ENCODE measurements at regions of chr7 and their contacts with region 1.

Region 1: DNA sequence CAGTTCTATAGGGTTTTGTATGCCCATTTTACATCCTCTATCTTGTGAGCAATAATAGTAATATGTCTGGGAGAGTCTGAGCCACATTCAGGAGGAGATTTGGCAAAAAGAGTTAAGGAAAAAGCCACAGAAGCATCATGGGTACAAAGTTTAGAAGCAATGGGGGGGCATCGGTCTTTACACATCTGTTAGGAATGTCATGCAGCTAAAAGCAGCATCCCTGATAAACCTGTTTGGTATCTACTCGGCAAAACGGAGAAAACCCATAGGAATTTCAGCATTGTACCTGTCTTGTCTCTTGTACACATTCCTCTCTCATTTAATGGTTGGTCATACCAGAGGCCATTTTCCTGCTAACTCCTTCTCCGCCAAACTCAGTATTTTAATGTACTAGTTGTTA is 12.5 kb upstream of the HERPUD2 start:
- DNase-seq: no peak
- H3K4me3 ChIP-seq: no peak overlapping the region
- H3K27ac ChIP-seq: no peak overlapping the region
- H3K4me1 ChIP-seq: peaks cover 28% of the 10 kb centered on the region
- H3K27me3 ChIP-seq: no peaks in the 10 kb centered on the region
- CTCF ChIP-seq: no peak

Region 2: DNA sequence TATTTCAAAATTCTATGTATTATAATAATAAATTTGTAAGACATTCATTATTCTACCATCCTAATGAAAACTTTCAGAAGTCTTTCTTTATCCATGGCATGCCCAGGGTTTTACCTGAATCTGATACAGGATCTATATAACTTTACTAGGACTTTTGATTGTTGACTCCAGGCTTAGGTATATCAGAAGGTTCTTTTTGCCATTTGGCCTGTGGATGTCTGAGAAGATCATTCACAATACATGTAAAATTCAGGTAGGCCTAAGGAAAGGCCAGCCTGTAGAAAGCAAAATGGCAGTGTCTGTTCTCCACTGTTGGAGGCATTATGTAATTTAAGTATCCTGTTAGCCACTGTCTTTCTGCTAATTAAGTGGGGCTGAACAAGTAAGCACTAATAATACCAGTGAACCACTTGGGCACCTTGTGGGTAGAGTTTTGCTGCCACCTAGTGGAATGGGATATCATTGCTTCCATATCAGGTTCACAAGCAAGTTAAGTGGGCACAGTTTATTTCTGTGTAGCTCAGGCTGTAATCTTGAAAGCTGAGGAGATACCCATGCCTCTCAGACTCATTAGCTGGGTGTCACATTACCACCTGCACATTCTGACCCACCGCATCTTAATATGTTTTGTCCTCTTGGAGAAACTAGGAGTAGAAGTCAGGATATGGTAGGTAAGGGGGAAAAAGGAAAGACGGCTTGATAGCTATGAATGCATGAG is 198.9 kb after region 1 on chr7:
- CTCF ChIA-PET with region 1: interaction called, 5 read pairs
- POLR2A ChIA-PET with region 1: no interaction called
- intact Hi-C with region 1: loop called (anchors 1 kb)
- DNase-seq: peak; percentile 87
- H3K4me3 ChIP-seq: no peak overlapping the region
- H3K27ac ChIP-seq: no peak overlapping the region
- H3K4me1 ChIP-seq: peaks cover 32% of the 10 kb centered on the region
- H3K27me3 ChIP-seq: no peaks in the 10 kb centered on the region
- CTCF ChIP-seq: peak; percentile 85

Region 3: DNA sequence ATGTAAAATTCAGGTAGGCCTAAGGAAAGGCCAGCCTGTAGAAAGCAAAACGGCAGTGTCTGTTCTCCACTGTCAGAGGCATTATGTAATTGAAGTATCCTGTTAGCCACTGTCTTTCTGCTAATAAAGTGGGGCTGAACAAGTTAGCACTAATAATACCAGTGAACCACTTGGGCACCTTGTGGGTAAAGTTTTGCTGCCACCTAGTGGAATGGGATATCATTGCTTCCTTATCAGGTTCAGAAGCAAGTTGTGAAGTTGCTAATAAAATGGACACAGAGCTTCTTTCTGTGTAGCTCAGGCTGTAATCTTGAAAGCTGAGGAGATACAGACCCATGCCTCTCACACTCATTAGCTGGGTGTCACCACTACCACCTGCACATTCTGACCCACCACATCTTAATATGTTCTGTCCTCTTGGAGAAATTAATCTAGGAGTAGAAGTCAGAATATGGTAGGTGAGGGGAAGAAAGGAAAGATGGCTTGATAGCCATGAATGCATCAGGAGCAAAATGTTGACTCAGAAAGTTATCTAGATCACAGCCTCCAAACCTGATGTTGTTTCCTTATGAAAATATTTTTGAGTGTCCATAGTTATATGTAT is 268.5 kb after region 1 on chr7:
- CTCF ChIA-PET with region 1: no interaction called
- POLR2A ChIA-PET with region 1: no interaction called
- intact Hi-C with region 1: loop called (anchors 2 kb)
- DNase-seq: peak; percentile 85
- H3K4me3 ChIP-seq: no peak overlapping the region
- H3K27ac ChIP-seq: no peak overlapping the region
- H3K4me1 ChIP-seq: peaks cover 6% of the 10 kb centered on the region
- H3K27me3 ChIP-seq: no peaks in the 10 kb centered on the region
- CTCF ChIP-seq: peak; percentile 80

Region 4: DNA sequence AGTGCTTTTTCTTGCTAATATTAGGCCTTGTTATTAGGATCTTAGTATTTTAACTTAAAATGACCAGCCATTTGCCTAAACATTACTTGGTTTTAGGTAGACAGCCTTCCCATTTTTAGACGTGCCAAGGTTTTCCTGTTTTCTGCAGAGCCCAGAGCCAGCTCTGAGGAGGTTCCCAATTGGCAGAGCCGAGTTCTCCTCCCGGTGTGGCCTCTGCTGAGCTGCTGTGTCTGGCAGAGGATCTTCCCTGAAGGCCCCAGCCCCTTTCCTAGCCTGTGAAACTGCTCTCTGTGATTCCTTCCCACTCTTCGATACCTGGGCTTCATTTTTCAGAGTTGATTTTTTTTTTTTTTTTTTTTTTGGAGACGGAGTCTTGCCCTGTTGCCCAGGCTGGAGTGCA is 537.0 kb after region 1 on chr7:
- CTCF ChIA-PET with region 1: no interaction called
- POLR2A ChIA-PET with region 1: no interaction called
- intact Hi-C with region 1: no loop called
- DNase-seq: no peak
- H3K4me3 ChIP-seq: no peak overlapping the region
- H3K27ac ChIP-seq: no peak overlapping the region
- H3K4me1 ChIP-seq: no peaks in the 10 kb centered on the region
- H3K27me3 ChIP-seq: no peaks in the 10 kb centered on the region
- CTCF ChIP-seq: no peak

Region 5: DNA sequence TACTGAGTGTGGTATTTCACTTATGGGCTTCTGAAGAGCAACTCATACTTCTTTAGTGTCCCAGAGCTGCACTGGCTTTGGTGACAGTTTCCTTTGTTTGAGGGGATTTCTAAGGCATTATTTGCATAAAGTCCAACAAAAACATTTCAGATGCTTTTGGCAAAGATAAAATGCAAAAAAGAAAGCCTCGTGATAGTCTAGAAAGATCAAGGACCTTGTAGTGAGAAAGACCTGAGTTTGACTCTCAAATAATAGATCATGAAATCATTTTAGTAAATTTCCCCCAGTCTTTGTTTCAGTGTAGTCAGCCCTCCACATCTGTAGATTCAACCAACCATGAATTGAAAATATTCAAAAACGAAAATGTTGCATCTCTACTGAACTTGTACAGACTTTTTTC is 553.1 kb after region 1 on chr7:
- CTCF ChIA-PET with region 1: no interaction called
- POLR2A ChIA-PET with region 1: no interaction called
- intact Hi-C with region 1: no loop called
- DNase-seq: no peak
- H3K4me3 ChIP-seq: no peak overlapping the region
- H3K27ac ChIP-seq: no peak overlapping the region
- H3K4me1 ChIP-seq: no peaks in the 10 kb centered on the region
- H3K27me3 ChIP-seq: no peaks in the 10 kb centered on the region
- CTCF ChIP-seq: no peak

Measured in A673 (cell line).